K562 (cell line): ENCODE measurements at regions of chr11 and their contacts with region 1.

Region 1: GRCh38 chr11:34840736-34841386 is 75.3 kb downstream of the APIP start:
- DNase-seq: peak; percentile 26 to 73 (median 46)
- ATAC-seq: peak; percentile 95
- H3K4me3 ChIP-seq: no peak overlapping the region
- H3K27ac ChIP-seq: no peak overlapping the region; the same call in 2 of the 3 replicates
- H3K4me1 ChIP-seq: no peaks in the 10 kb centered on the region
- H3K27me3 ChIP-seq: no peaks in the 10 kb centered on the region
- CTCF ChIP-seq: peak; percentile 64 to 74 (median 70)
- EP300 ChIP-seq: no peak
- POLR2A ChIP-seq: no peak
- RAD21 ChIP-seq: peak; percentile 18 to 63; a peak in 2 of 4 replicates

Region 2: GRCh38 chr11:34263440-34264172 is 577.3 kb before region 1 on chr11:
- CTCF ChIA-PET with region 1: no interaction called
- POLR2A ChIA-PET with region 1: no interaction called
- in situ Hi-C with region 1: no loop called
- intact Hi-C with region 1: no loop called
- DNase-seq: no peak
- ATAC-seq: no peak
- H3K4me3 ChIP-seq: no peak overlapping the region
- H3K27ac ChIP-seq: no peak overlapping the region
- H3K4me1 ChIP-seq: peaks cover 0 to 4% of the 10 kb centered on the region in 2 experiments; a peak in 2 of 5 replicates
- H3K27me3 ChIP-seq: peaks cover 21 to 53% of the 10 kb centered on the region in 2 experiments; a peak in 3 of 5 replicates
- CTCF ChIP-seq: no peak
- EP300 ChIP-seq: no peak
- POLR2A ChIP-seq: no peak
- RAD21 ChIP-seq: no peak

Region 3: DNA sequence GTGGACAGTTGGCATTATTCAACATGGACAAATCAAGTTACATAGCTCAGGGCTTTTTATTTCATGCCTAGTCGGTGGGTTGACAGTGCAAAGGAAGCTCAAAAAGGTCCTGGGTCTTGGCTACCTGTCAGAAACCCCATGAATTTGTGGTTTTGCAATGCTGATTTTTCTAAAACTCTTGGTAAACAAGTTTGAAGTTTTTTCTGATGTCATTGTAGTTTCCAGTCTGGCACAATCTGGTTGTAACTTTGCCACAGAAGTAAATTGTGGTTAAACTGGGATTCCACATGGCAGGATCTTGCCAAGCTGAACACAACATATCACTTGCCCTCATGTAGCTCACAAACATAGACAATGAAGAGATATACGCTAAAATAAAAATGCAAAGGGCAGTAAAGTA is 119.2 kb before region 1 on chr11:
- CTCF ChIA-PET with region 1: no interaction called
- POLR2A ChIA-PET with region 1: no interaction called
- in situ Hi-C with region 1: no loop called
- intact Hi-C with region 1: no loop called
- DNase-seq: no peak
- ATAC-seq: no peak
- H3K4me3 ChIP-seq: no peak overlapping the region
- H3K27ac ChIP-seq: no peak overlapping the region
- H3K4me1 ChIP-seq: no peaks in the 10 kb centered on the region
- H3K27me3 ChIP-seq: no peaks in the 10 kb centered on the region
- CTCF ChIP-seq: no peak
- EP300 ChIP-seq: no peak
- POLR2A ChIP-seq: no peak
- RAD21 ChIP-seq: no peak

Region 4: GRCh38 chr11:34791780-34792542 is 48.9 kb before region 1 on chr11:
- CTCF ChIA-PET with region 1: no interaction called
- POLR2A ChIA-PET with region 1: no interaction called
- in situ Hi-C with region 1: no loop called
- intact Hi-C with region 1: loop called (anchors 5 kb)
- DNase-seq: peak; percentile 29 to 66 (median 38)
- ATAC-seq: peak; percentile 87
- H3K4me3 ChIP-seq: no peak overlapping the region
- H3K27ac ChIP-seq: peak overlapping the region; percentile 49; the same call in 1 of the 3 replicates
- H3K4me1 ChIP-seq: no peaks in the 10 kb centered on the region; a peak in 2 of 5 replicates
- H3K27me3 ChIP-seq: no peaks in the 10 kb centered on the region
- CTCF ChIP-seq: peak in 2 of 3 experiments; percentile 26 to 28; a peak in 3 of 6 replicates
- EP300 ChIP-seq: no peak
- POLR2A ChIP-seq: no peak
- RAD21 ChIP-seq: no peak

Region 5: DNA sequence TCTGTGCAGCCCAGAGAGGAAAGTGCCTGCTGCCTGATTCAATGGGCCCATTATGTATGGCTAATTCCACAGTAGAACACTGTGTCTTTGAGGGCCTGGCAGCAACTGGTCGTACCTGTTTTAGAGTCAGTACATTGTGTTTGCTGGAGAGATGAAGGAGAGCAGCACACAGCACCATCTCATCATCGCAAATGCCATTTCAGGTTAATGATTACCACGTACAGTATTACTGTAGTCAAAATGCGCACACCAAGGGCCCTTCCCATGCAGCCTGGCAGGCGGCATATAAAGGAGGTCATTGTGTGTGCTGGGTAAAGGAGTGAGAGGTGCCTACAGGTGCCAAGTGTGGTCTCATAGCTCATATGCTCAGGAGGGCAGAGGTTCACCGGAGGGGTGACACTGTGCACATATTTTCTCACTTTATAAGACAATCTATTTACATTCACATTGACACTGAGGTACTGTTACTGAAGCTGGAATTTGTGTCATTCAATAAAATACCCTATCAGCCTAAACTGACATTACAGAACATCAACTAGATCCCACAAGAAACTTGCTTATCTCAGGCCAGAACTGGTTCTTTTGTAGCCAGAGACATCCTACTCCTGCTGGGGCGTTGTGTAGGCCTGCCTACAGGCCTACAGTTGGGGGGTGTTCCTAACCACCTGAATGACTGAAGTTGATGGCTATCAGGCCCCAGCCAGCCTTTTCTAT is 15.0 kb before region 1 on chr11:
- CTCF ChIA-PET with region 1: no interaction called
- POLR2A ChIA-PET with region 1: no interaction called
- in situ Hi-C with region 1: no loop called
- intact Hi-C with region 1: no loop called
- DNase-seq: peak in 3 of 4 experiments; percentile 26 to 77 (median 52)
- ATAC-seq: peak; percentile 66
- H3K4me3 ChIP-seq: no peak overlapping the region
- H3K27ac ChIP-seq: peak overlapping the region; percentile 60; the same call in 2 of the 3 replicates
- H3K4me1 ChIP-seq: peaks cover 8 to 25% of the 10 kb centered on the region in 2 experiments
- H3K27me3 ChIP-seq: no peaks in the 10 kb centered on the region
- CTCF ChIP-seq: no peak
- EP300 ChIP-seq: no peak; the same call in 1 of the 2 replicates
- POLR2A ChIP-seq: no peak
- RAD21 ChIP-seq: no peak

Region 6: DNA sequence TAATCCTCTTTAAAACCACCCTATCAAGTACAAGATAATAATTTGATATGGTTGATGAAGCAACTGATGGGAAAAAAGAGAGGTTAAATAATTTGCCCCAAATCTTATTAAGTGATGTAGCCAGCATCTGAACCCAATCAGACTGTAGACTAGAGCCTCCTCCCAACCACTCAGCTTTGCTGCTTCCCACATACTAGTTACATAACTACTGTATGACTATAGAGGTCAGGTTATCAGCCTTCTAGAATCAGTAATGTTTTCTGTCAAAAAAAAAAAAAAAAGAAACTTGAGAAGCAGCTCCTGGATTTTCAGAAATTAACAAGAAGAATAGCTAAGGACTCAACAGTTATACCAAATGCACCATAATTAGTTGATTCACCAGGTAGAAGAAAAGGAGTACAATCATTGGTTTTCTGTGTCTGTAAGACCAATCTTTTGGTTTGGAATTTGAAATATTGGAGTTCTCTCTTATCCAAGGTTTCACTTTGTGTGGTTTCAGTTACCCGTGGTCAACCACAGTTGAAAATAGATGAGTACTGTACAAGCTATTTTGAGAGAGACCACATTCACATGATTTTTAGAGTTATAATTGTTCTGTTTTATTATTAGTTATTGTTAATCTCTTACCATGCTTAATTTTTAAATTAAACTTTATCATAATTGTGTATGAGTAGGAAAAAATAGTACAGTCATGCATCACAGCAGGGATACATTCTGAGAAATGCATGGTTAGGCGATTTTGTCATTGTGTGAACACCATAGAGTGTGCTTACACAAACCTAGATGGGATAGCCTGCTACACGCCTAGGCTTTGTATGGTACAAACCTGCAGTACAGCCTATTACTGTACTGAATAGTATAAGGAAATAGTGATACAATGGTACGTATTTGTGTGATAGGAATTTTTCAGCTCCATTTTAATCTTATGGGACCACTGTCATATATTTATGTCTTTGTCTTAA is 147.7 kb after region 1 on chr11:
- CTCF ChIA-PET with region 1: no interaction called
- POLR2A ChIA-PET with region 1: no interaction called
- in situ Hi-C with region 1: no loop called
- intact Hi-C with region 1: no loop called
- DNase-seq: no peak
- ATAC-seq: no peak; the same call in 2 of the 3 replicates
- H3K4me3 ChIP-seq: no peak overlapping the region
- H3K27ac ChIP-seq: no peak overlapping the region
- H3K4me1 ChIP-seq: no peaks in the 10 kb centered on the region
- H3K27me3 ChIP-seq: no peaks in the 10 kb centered on the region
- CTCF ChIP-seq: no peak
- EP300 ChIP-seq: no peak
- POLR2A ChIP-seq: no peak
- RAD21 ChIP-seq: no peak